ENCODE measurements at regions of chr1 and their contacts with region 1.

Region 1: DNA sequence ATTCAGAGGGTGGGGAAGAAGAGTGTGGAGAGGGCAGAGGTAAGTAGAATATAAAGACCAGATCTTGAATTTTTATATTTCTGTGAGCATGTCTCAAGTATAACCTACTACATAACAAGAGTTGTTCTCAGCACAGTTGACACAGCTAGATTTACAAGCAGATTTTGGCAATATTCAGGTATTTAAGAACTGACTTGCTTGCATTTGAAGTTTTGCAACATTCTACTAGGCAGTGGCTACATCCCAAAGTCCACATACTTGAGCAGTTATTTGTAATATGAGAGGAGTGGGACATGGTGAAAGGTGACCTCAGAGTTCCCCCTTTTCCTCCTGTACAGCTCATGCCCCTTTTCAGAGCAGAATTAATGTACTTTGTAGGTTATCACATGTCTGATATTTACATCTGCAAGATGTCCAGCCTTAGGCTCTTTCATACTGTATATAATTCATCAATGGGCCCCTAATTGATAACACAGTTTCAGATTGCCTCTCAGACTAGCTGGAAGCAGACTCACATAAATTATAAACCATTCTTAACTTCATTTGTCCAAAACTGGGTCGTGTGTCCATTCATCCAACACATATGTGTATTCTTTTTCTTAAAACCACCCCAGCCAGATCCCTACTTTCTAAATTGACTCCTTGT is 136.7 kb upstream of the RAVER2 start:
- DNase-seq: no peak
- H3K4me3 ChIP-seq: no peak overlapping the region
- H3K27ac ChIP-seq: no peak overlapping the region
- H3K4me1 ChIP-seq: no peaks in the 10 kb centered on the region
- H3K27me3 ChIP-seq: no peaks in the 10 kb centered on the region
- CTCF ChIP-seq: no peak
- POLR2A ChIP-seq: no peak

Region 2: GRCh38 chr1:65165269-65165993 is 557.3 kb after region 1 on chr1:
- intact Hi-C with region 1: loop called (anchors 5 kb)
- DNase-seq: no peak
- H3K4me3 ChIP-seq: no peak overlapping the region
- H3K27ac ChIP-seq: peak overlapping the region in 1 of 2 donors; percentile 12
- H3K4me1 ChIP-seq: peaks cover 5 to 6% of the 10 kb centered on the region in 2 donors
- H3K27me3 ChIP-seq: no peaks in the 10 kb centered on the region
- CTCF ChIP-seq: no peak
- POLR2A ChIP-seq: no peak